Heart left ventricle (tissue), 16 donors: ENCODE measurements at regions of chr12 and their contacts with region 1.

Region 1: GRCh38 chr12:96035278-96036236 is at the start of gene LTA4H:
- DNase-seq: peak; percentile 96 to 98 (median 97)
- ATAC-seq: peak; percentile 98 to 99 (median 98)
- H3K4me3 ChIP-seq: peak within 1 kb of the TSS; percentile 70 to 98 (median 89)
- H3K27ac ChIP-seq: peak within 1 kb of the TSS in 11 of 12 donors; percentile 59 to 92 (median 84)
- H3K4me1 ChIP-seq: peaks cover 0 to 33% (median 16%) of the 10 kb centered on the region in 12 donors
- H3K27me3 ChIP-seq: no peaks in the 10 kb centered on the region
- CTCF ChIP-seq: no peak
- POLR2A ChIP-seq: peak in 1 of 2 donors; percentile 81
- total RNA-seq, gene LTA4H: 32.8 to 72.0 (median 42.6) TPM

Region 2: DNA sequence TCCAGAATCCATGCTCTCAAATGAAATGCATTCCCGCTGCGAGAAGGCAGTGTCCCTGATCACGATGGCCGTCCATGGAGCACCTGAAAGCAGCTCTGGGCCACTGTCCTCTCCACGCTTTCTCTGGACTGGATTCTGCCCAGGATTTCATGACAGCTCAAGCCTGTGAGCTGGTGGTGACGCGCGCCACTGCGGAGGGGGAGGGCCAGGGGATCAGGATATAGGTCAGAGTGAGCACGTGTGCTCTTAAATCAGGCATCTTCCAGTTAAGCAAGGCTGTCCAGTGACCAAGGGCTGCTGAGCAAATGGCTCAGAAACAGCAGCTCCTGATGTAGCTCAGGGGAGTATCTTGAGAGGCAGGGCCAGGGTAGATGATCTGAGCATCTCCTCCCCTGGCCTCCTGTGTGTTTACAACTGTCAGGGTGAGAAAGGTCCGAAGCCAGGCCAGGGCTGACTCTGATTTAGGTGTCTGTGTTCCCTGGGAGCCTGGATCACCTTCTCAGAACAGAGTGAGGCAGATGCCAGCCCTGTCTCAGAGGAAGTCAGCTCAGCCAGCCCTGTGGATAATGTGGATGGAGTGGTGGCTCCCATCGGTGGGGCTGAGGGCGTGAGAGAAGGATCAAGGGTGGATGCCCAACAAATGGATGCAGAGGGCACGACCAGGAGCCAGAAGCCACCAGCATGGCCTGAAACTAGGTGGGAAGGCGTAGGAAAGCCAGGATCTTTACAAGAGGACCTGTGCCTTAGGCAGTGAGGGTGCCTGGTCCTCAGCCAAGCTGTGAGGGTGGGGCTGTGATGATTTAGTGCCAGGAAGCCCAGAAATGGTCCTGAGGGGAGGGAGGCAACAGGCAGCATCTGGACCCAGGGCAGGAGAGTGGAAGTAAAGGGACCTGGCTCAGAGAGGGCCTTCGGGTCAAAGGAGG is 213.9 kb after region 1 on chr12:
- intact Hi-C with region 1: no loop called
- DNase-seq: peak; percentile 66 to 84 (median 78)
- ATAC-seq: peak; percentile 84 to 94 (median 92)
- H3K4me3 ChIP-seq: no peak overlapping the region
- H3K27ac ChIP-seq: peak overlapping the region in 11 of 12 donors; percentile 15 to 76 (median 60)
- H3K4me1 ChIP-seq: peaks cover 14 to 53% (median 31%) of the 10 kb centered on the region in 12 donors
- H3K27me3 ChIP-seq: no peaks in the 10 kb centered on the region
- CTCF ChIP-seq: no peak
- POLR2A ChIP-seq: no peak

Region 3: DNA sequence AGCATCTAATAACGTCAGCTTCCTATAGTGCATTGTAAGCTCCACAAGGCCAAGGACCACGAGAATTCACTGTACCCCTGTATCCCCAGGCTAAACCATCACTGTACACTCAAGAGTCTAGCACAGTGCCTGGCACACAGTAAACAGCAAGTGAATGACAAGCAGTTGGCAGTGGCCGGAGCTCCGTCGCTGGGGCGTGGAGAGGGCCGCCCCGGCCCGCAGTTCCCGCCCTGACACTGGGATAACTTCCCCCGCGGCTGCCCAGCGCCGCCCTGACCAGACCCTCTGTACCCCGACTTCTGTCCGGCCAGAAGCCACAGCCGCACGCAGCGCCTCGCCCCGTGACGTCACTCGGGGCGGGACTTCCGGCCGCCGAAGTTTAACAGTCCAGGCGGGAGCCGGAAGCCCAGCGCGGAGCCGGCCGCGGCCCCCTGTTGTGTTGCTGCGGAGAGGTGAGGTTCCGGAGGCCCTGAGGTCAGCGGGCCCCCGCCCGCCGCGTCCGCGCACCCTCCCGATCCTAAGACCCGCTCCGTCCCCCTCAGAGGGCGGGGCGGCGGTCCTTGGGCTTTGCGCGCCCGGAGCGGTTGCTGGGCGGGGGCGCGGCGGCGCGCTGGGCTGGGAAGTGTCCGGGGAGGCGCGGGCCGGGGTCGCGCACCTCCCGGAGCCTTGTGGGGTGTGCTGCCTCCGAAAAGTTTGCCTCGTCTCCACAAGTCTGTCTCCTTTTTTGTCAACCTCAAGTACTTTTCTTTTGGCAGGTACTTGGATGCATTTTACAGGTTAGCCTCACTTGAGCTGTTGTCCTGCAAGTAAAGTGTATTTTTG is 871.5 kb after region 1 on chr12 and contains the start of gene NEDD1:
- intact Hi-C with region 1: loop called in 1 of 10 experiments (anchors 5 kb)
- DNase-seq: peak; percentile 87 to 93 (median 89)
- ATAC-seq: peak; percentile 94 to 99 (median 98)
- H3K4me3 ChIP-seq: peak within 1 kb of the TSS; percentile 61 to 97 (median 86)
- H3K27ac ChIP-seq: peak within 1 kb of the TSS; percentile 66 to 94 (median 82)
- H3K4me1 ChIP-seq: peaks cover 0 to 35% (median 9%) of the 10 kb centered on the region in 12 donors
- H3K27me3 ChIP-seq: no peaks in the 10 kb centered on the region
- CTCF ChIP-seq: no peak
- POLR2A ChIP-seq: peak in 1 of 2 donors; percentile 80
- total RNA-seq, gene NEDD1: 11.5 to 16.4 (median 13.2) TPM